ENCODE measurements at regions of chr3 and their contacts with region 1.

Region 1: GRCh38 chr3:82133070-82133606 is 371.7 kb upstream of the GBE1 start:
- DNase-seq: peak; percentile 44 to 70
- ATAC-seq: peak; percentile 76 to 93 (median 82)
- H3K4me3 ChIP-seq: no peak overlapping the region
- H3K27ac ChIP-seq: no peak overlapping the region
- H3K4me1 ChIP-seq: no peaks in the 10 kb centered on the region
- H3K27me3 ChIP-seq: no peaks in the 10 kb centered on the region
- CTCF ChIP-seq: peak; percentile 87

Region 2: DNA sequence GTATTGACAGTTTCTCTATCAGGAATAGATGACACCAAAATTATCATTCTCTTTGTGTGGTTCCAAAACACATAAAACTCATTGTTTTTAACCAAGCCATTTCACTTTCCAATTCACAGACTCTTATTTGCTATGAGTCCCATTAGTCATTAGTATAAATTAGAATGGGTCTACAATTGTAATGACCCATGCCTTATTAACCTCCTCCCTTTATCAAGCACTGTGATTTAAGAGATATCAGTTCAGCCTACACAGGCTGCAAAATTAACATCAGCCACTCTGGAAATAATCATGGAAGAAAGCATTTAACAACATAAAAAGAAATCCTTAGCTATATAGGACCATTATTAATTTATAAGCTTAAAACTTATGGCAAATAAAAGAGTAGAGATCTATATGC is 812.3 kb before region 1 on chr3:
- intact Hi-C with region 1: no loop called
- DNase-seq: no peak
- ATAC-seq: no peak
- H3K4me3 ChIP-seq: no peak overlapping the region
- H3K27ac ChIP-seq: no peak overlapping the region
- H3K4me1 ChIP-seq: no peaks in the 10 kb centered on the region
- H3K27me3 ChIP-seq: no peaks in the 10 kb centered on the region
- CTCF ChIP-seq: no peak

Region 3: GRCh38 chr3:81666493-81667121 is 466.5 kb before region 1 on chr3:
- intact Hi-C with region 1: loop called in 1 of 2 experiments (anchors 10 kb)
- DNase-seq: no peak
- ATAC-seq: no peak
- H3K4me3 ChIP-seq: no peak overlapping the region
- H3K27ac ChIP-seq: no peak overlapping the region
- H3K4me1 ChIP-seq: peaks cover 9% of the 10 kb centered on the region
- H3K27me3 ChIP-seq: no peaks in the 10 kb centered on the region
- CTCF ChIP-seq: peak; percentile 66

Region 4: GRCh38 chr3:81871358-81872155 is 261.6 kb before region 1 on chr3:
- intact Hi-C with region 1: loop called (anchors 2 to 5 kb)
- DNase-seq: no peak
- ATAC-seq: no peak
- H3K4me3 ChIP-seq: no peak overlapping the region
- H3K27ac ChIP-seq: no peak overlapping the region
- H3K4me1 ChIP-seq: peaks cover 4% of the 10 kb centered on the region
- H3K27me3 ChIP-seq: no peaks in the 10 kb centered on the region
- CTCF ChIP-seq: peak; percentile 37

Region 5: DNA sequence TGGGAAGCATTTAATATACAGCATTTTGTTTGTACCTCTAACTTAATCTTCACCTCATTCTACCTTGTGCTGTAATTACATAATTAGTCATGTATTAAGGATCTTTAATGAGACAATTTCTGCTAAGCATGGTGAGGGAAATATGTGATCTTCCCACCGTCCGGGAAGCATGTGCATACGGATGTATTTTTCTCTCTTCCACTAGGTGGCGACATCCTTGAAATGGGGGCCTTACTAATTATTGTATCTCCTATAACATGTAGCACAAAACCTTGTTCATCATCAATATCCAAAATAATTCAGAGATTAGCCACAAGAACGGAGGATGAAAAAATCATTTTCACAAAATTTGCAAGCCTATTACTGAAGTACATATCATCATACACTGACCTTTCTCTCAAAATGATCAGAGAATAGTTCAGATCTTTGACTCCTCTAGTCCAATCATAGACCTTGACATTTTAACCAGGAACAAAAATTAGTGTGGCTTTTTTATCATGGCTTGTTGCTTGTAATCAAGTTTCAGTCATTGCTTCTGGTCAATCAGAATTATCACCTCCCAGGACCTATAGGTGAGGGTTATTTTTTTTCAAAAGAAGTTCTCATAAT is 222.8 kb before region 1 on chr3:
- intact Hi-C with region 1: loop called in 1 of 2 experiments (anchors 2 kb)
- DNase-seq: no peak
- ATAC-seq: peak in 2 of 4 donors; percentile 53 to 70
- H3K4me3 ChIP-seq: no peak overlapping the region
- H3K27ac ChIP-seq: no peak overlapping the region
- H3K4me1 ChIP-seq: no peaks in the 10 kb centered on the region
- H3K27me3 ChIP-seq: no peaks in the 10 kb centered on the region
- CTCF ChIP-seq: peak; percentile 70

Region 6: GRCh38 chr3:82186017-82186416 is 52.9 kb after region 1 on chr3:
- intact Hi-C with region 1: no loop called
- DNase-seq: no peak
- ATAC-seq: no peak
- H3K4me3 ChIP-seq: no peak overlapping the region
- H3K27ac ChIP-seq: no peak overlapping the region
- H3K4me1 ChIP-seq: no peaks in the 10 kb centered on the region
- H3K27me3 ChIP-seq: no peaks in the 10 kb centered on the region
- CTCF ChIP-seq: no peak

Measured in psoas muscle (tissue), 8 donors.